HCT116 (cell line): ENCODE measurements at regions of chr10 and their contacts with region 1.

Region 1: GRCh38 chr10:25080880-25081581 is 64.6 kb downstream of the THNSL1 start:
- DNase-seq: peak; percentile 79
- ATAC-seq: peak; percentile 98
- H3K4me3 ChIP-seq: no peak overlapping the region
- H3K27ac ChIP-seq: no peak overlapping the region
- H3K4me1 ChIP-seq: peaks cover 0 to 8% of the 10 kb centered on the region in 2 experiments; a peak in 2 of 4 replicates
- H3K27me3 ChIP-seq: no peaks in the 10 kb centered on the region
- CTCF ChIP-seq: peak; percentile 87 to 95 (median 93)
- POLR2A ChIP-seq: no peak
- RAD21 ChIP-seq: peak; percentile 96

Region 2: GRCh38 chr10:24642622-24643417 is 438.2 kb before region 1 on chr10:
- CTCF ChIA-PET with region 1: interaction called, 6 read pairs
- POLR2A ChIA-PET with region 1: no interaction called
- RAD21 ChIA-PET with region 1: no interaction called
- intact Hi-C with region 1: loop called (anchors 1 kb)
- DNase-seq: peak; percentile 71
- ATAC-seq: peak; percentile 91
- H3K4me3 ChIP-seq: no peak overlapping the region
- H3K27ac ChIP-seq: no peak overlapping the region
- H3K4me1 ChIP-seq: peaks cover 16 to 29% of the 10 kb centered on the region in 2 experiments
- H3K27me3 ChIP-seq: no peaks in the 10 kb centered on the region
- CTCF ChIP-seq: peak; percentile 67 to 81 (median 79)
- POLR2A ChIP-seq: no peak
- RAD21 ChIP-seq: peak; percentile 91

Region 3: DNA sequence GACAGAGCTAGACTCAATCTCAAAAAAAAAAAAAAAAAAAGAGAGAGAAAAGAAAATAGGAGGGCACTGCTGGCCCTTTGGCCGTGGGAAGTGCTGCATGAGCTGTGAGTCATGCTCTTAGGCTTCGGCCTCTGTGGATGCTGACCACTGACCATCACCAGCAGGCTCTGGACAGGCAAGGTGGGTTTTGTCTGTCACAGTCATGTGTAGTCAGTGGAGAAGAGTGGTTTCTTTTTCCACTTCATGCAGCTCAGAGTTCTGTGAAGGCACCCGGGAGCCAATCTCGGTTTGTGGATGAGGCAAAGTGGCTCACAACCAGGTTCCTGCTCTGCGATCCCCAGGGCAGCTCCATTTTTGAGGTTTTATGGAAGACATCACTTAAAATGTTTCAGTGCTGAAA is 186.7 kb before region 1 on chr10:
- CTCF ChIA-PET with region 1: no interaction called
- POLR2A ChIA-PET with region 1: no interaction called
- RAD21 ChIA-PET with region 1: no interaction called
- intact Hi-C with region 1: loop called (anchors 10 kb)
- DNase-seq: no peak
- ATAC-seq: no peak
- H3K4me3 ChIP-seq: no peak overlapping the region
- H3K27ac ChIP-seq: no peak overlapping the region
- H3K4me1 ChIP-seq: peaks cover 58 to 84% of the 10 kb centered on the region in 2 experiments
- H3K27me3 ChIP-seq: no peaks in the 10 kb centered on the region
- CTCF ChIP-seq: no peak
- POLR2A ChIP-seq: no peak
- RAD21 ChIP-seq: no peak

Region 4: DNA sequence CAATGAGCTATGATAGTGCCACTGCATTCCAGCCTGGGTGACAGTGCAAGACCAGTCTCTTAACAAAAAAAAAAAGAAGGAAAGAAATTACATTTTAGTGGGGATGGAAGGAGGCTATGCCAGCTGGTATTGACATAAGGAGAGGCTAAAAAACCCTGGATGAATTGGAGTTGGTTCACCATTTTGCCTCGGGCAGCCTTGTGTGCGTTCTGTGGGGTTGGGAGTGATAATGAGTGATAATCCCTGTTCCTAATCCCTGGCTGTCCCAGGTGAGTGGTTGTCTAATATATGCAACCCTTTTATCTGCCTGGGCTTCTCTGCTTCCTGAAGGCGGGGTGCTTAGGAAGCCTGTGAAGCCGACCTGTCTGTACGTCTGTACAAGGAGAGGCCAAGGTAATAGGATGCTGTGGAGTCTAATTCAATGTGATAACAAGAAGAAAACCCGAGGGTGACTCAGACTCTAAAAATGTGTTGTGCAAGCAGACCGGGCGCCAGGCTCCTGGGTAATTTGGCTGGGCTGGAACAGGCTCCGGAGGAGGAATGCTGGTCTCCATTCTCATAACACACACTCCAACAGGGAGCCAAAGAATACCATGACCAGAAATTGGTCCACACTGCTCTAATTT is 21.2 kb before region 1 on chr10:
- CTCF ChIA-PET with region 1: no interaction called
- POLR2A ChIA-PET with region 1: no interaction called
- RAD21 ChIA-PET with region 1: no interaction called
- intact Hi-C with region 1: no loop called
- DNase-seq: peak; percentile 79
- ATAC-seq: peak; percentile 79
- H3K4me3 ChIP-seq: peak overlapping the region in 1 of 2 experiments; percentile 44; a peak in 2 of 4 replicates
- H3K27ac ChIP-seq: peak overlapping the region; percentile 42
- H3K4me1 ChIP-seq: peaks cover 31 to 53% of the 10 kb centered on the region in 2 experiments
- H3K27me3 ChIP-seq: no peaks in the 10 kb centered on the region
- CTCF ChIP-seq: no peak
- POLR2A ChIP-seq: no peak
- RAD21 ChIP-seq: no peak

Region 5: DNA sequence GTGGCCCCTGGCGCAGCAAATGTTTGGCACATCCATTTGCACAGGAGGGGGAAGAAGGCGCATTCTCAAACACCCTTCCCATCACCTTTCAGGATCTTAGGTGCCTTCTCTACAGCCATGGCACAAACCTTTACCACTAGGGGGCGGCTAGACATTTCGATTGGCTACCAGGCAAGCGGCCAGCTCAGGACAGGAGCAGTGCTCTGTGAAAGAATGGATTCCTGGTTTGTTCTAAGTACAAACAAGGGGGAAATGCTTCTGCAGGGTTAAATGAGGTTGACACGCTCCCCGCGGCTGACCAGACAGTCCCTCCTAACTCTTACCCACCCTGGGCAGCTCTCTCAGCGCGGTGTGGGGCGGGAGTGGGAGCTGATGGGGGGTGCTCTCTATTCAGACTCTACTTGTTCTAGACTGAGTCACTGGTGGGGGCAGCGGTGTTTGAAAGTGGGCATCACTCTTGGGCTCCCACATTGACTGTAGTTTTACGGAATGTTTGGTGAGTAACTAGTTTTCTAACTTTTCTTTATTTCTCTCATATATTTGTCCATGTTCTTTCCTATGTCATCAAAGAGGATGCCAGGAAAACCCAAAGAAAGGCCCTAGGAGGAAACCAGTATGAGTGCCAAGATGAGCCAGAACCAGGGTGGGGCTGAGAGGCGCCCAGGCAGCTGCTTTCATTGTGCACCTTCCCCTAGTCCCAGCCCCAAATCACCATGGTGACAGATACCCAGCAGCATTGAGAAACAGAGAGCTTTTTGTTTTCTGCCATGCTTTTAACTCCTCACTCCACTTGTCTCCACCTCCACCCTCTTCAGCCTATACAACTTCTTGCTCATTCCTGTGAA is 32.4 kb after region 1 on chr10:
- CTCF ChIA-PET with region 1: interaction called, 10 read pairs
- POLR2A ChIA-PET with region 1: no interaction called
- RAD21 ChIA-PET with region 1: no interaction called
- intact Hi-C with region 1: no loop called
- DNase-seq: peak; percentile 72
- ATAC-seq: peak; percentile 96
- H3K4me3 ChIP-seq: no peak overlapping the region
- H3K27ac ChIP-seq: no peak overlapping the region
- H3K4me1 ChIP-seq: peaks cover 6 to 16% of the 10 kb centered on the region in 2 experiments; a peak in 3 of 4 replicates
- H3K27me3 ChIP-seq: no peaks in the 10 kb centered on the region
- CTCF ChIP-seq: peak; percentile 73 to 89 (median 87); a peak in 5 of 6 replicates
- POLR2A ChIP-seq: no peak
- RAD21 ChIP-seq: peak; percentile 86